ENCODE measurements at regions of chr7 and their contacts with region 1.

Region 1: DNA sequence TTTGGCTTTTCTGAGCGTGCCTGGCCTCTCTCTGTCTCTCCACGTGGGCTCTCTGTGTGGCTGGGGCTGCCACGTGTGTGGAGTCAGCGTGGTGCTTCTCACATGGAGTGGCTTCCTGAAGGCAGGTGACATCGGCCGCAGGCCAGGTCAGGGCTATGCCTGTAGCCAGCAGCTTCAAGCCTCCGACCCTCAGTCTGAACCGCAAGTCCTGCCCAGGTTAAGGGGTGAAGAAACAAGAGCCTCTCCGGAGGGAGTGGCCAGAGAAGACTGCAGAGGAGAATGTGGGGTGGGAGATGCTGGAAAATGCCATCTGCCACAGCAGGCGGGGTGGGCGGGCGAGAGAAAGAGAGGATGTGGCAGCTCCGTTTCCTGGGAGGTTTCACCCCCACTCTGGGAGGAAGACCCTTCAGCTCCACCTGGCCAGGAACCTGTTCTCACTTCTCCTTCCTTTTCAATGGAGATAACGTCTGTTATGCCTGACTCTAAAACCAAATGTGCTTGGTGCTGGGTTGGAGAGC is 14.3 kb upstream of the VIPR2 start:
- DNase-seq: no peak
- H3K4me3 Mint-ChIP-seq: no peak overlapping the region
- H3K27ac Mint-ChIP-seq: no peak overlapping the region
- H3K4me1 Mint-ChIP-seq: no peaks in the 10 kb centered on the region
- H3K27me3 Mint-ChIP-seq: peaks cover 16% of the 10 kb centered on the region
- CTCF ChIP-seq: no peak

Region 2: DNA sequence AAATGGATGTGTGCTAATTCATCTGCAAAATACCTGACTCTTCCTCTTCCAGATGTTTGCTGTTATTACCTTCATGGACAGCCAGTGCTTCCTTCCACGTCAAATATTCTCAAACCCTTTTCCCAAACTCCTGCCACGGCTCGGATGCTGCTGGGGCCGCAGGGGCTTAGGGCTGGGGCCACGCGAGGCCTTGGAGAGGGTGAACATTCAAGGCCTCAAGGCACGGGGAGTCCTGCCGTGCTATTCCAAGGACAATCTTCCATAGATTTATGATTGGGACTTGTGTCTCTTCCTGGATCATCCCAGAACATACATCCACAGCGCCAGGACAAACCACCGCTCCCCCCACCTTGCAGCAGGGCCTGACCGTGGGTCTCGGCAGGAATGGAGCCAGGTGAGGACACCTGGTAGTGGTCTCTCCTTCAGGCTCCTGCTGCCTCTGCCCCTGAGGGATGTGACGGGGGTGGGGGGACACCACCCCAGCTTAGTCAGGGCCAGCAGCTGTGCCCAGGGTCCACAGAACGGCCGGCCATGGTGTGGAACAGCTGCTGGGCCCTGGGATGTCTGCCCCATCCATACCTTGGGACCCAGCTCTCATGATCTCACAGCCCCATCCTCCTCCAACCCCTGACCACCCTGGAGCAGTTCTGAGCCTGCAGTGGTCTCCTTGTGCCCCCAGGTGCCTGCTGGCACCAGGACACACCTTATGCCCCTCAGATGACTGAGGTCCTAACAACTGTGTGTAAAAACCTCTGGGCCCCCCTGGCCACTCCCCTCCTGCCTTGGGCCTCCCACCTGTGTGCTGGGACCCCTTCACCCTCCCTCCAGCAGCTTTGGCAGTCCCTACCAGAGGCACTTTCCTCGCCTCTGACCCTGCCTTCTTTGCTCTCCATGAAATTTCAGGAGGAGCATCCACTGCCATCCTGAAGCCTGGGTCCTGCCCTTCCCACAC is 31.0 kb before region 1 on chr7:
- CTCF ChIA-PET with region 1: no interaction called
- POLR2A ChIA-PET with region 1: interaction called, 3 read pairs
- intact Hi-C with region 1: loop called (anchors 1 kb)
- DNase-seq: no peak
- H3K4me3 Mint-ChIP-seq: no peak overlapping the region
- H3K27ac Mint-ChIP-seq: no peak overlapping the region
- H3K4me1 Mint-ChIP-seq: no peaks in the 10 kb centered on the region
- H3K27me3 Mint-ChIP-seq: peaks cover 65% of the 10 kb centered on the region
- CTCF ChIP-seq: no peak

Measured in MCF 10A (cell line).